Transverse colon (tissue), 4 donors: ENCODE measurements at regions of chr6 and their contacts with region 1.

Region 1: DNA sequence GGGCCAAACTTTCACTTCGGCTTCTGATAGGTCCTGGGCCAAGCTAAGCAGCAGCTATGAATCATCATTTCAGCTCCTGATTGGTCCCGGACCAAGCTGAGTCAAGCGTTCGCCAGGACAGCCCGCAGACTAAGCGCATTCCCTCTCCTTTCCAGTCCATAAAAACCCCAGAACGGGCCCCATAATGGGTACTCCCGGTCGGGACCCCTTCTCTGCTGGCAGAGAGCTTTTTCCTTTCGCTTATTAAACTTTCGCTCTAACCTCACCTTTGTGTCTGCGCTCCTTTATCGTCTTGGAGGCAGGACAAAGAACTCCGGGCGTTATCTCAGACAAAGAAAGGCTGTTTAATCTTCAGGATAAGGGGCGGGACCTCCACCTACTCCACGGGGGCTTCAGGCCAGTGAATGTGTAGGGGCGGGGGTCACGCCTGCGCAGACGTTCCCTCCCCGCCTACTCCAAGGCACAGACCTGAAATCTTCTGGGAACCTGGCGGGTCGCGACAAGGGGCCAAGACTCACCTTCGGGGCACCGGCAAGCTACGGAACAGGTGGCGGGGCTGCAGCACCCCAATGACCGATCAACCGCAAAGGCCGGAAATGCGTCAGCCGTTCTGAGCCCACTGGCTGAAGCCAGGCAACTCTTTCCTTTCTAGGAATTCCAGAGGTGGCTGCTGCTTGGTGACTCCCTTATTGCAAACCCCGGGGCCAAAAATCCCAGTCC is at the start of gene ZSCAN31:
- DNase-seq: peak; percentile 96
- H3K4me3 ChIP-seq: peak within 1 kb of the TSS; percentile 52 to 76 (median 63)
- H3K27ac ChIP-seq: peak within 1 kb of the TSS; percentile 96 to 98 (median 96)
- H3K4me1 ChIP-seq: peaks cover 6 to 24% (median 15%) of the 10 kb centered on the region in 4 donors
- H3K27me3 ChIP-seq: no peaks in the 10 kb centered on the region
- CTCF ChIP-seq: peak in 1 of 5 experiments; percentile 5
- EP300 ChIP-seq: no peak
- POLR2A ChIP-seq: peak; percentile 98
- total RNA-seq, gene ZSCAN31: 9.0 to 28.3 (median 17.0) TPM

Region 2: GRCh38 chr6:27157459-27158315 is 1178.0 kb before region 1 on chr6:
- in situ Hi-C with region 1: loop called in 1 of 4 experiments (anchors 25 kb)
- intact Hi-C with region 1: no loop called
- DNase-seq: peak; percentile 74
- H3K4me3 ChIP-seq: peak overlapping the region; percentile 12 to 51 (median 26)
- H3K27ac ChIP-seq: peak overlapping the region; percentile 8 to 50 (median 28)
- H3K4me1 ChIP-seq: peaks cover 4 to 14% (median 8%) of the 10 kb centered on the region in 4 donors
- H3K27me3 ChIP-seq: no peaks in the 10 kb centered on the region
- CTCF ChIP-seq: peak; percentile 16 to 58 (median 39)
- EP300 ChIP-seq: no peak
- POLR2A ChIP-seq: no peak

Region 3: DNA sequence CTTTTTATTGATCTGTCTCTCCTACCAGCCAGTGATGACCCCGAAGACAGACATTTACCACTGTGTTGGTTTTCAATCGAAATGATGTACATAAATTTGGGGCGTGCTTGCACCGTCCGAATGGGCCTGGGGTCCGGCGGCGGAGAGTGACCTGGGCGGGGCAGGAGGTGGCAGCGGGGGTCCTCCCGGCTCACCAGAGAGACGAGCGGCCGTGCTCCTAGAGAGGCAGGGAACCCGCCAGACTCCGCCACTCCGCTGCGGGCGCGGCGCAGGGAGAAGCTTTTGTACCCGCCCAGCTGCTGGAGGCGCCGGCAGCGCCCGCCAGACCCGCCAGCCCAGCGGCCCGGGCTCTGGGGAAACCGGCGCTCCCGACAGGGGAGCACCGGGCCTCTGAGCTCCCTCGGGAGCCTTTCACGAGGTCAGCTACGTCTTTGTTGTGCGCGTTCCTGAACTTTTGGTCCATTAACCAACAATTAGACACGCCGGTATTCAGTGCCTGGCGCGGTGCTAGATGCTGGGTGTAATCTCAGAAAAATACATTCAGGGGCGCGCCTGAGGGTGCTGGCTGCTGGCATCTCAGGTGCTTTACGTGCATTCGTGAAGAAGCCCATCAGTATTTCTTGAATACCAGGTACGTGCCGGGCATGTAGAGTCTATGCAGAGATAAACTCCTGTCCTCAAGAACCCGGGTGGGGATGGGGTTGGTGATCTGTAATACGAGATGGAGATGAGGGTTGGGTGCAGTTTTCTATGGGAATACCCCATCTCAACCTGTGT is 54.2 kb before region 1 on chr6 and contains the start of gene PGBD1:
- in situ Hi-C with region 1: no loop called
- intact Hi-C with region 1: loop called (anchors 10 kb)
- DNase-seq: peak; percentile 71
- H3K4me3 ChIP-seq: peak within 1 kb of the TSS; percentile 45 to 68 (median 60)
- H3K27ac ChIP-seq: peak within 1 kb of the TSS; percentile 34 to 53 (median 48)
- H3K4me1 ChIP-seq: peaks cover 0 to 16% (median 3%) of the 10 kb centered on the region in 4 donors
- H3K27me3 ChIP-seq: no peaks in the 10 kb centered on the region
- CTCF ChIP-seq: no peak
- EP300 ChIP-seq: no peak
- POLR2A ChIP-seq: no peak
- total RNA-seq, gene PGBD1: 0.75 to 3.2 (median 2.3) TPM